ENCODE measurements at regions of chr20 and their contacts with region 1.

Region 1: GRCh38 chr20:63846128-63846798 is 15.0 kb upstream of the ABHD16B start:
- DNase-seq: peak; percentile 70
- ATAC-seq: peak; percentile 65
- H3K4me3 Mint-ChIP-seq: peak overlapping the region; percentile 75
- H3K27ac Mint-ChIP-seq: peak overlapping the region; percentile 88
- H3K4me1 Mint-ChIP-seq: peaks cover 24% of the 10 kb centered on the region
- H3K27me3 Mint-ChIP-seq: no peaks in the 10 kb centered on the region; the same call in none of the 2 replicates
- CTCF ChIP-seq: no peak

Region 2: GRCh38 chr20:63858393-63859165 is 12.3 kb after region 1 on chr20:
- CTCF ChIA-PET with region 1: interaction called, 11 read pairs
- POLR2A ChIA-PET with region 1: interaction called, 22 read pairs
- DNase-seq: no peak
- ATAC-seq: peak; percentile 33
- H3K4me3 Mint-ChIP-seq: peak overlapping the region; percentile 43
- H3K27ac Mint-ChIP-seq: peak overlapping the region; percentile 86
- H3K4me1 Mint-ChIP-seq: peaks cover 47% of the 10 kb centered on the region
- H3K27me3 Mint-ChIP-seq: peaks cover 9% of the 10 kb centered on the region
- CTCF ChIP-seq: no peak

Region 3: GRCh38 chr20:63864847-63865640 is 18.8 kb after region 1 on chr20 and contains the start of gene TPD52L2:
- CTCF ChIA-PET with region 1: interaction called, 15 read pairs
- POLR2A ChIA-PET with region 1: interaction called, 22 read pairs
- DNase-seq: peak; percentile 99
- ATAC-seq: peak; percentile 94
- H3K4me3 Mint-ChIP-seq: peak within 1 kb of the TSS; percentile 94
- H3K27ac Mint-ChIP-seq: peak within 1 kb of the TSS; percentile 87
- H3K4me1 Mint-ChIP-seq: peaks cover 27% of the 10 kb centered on the region
- H3K27me3 Mint-ChIP-seq: no peaks in the 10 kb centered on the region
- CTCF ChIP-seq: no peak
- total RNA-seq, gene TPD52L2: 80.8 to 87.2 TPM (median 85.6 TPM) in 3 replicates

Measured in WTC11 (cell line).